ENCODE measurements at regions of chr7 and their contacts with region 1.

Region 1: GRCh38 chr7:155003376-155004214 is 671 bp upstream of the PAXIP1 start:
- DNase-seq: peak; percentile 54 to 91
- H3K4me3 ChIP-seq: peak overlapping the region; percentile 80 to 100
- H3K27ac ChIP-seq: peak overlapping the region; percentile 84 to 87
- H3K4me1 ChIP-seq: peaks cover 0 to 16% (median 14%) of the 10 kb centered on the region in 4 donors
- H3K27me3 ChIP-seq: no peaks in the 10 kb centered on the region
- CTCF ChIP-seq: no peak

Region 2: DNA sequence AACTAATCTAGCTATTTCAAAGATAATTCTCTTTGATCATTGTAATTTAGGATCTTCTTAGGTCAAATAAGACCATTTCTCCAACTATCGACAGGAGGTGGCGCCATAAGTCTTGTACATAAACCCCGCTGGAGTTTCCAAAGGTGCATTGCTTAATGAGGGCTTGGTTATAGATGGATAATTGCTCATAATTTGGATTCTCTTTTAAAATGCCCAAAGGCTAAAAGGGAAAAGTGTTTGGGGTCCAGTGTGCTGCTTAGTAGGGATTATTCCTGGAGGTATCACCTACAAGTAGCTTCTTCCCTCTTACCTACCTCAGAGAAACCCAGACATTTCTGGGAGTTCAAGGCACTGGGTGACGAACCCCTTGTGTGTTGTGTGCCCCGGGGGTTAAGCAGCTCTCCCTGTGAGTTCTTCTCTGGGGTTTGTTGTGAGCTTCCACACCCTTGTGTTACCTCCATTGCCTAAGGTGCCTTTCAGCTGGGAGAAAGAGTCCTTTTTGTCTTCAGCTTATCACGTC is 75.9 kb before region 1 on chr7:
- intact Hi-C with region 1: loop called (anchors 5 kb)
- DNase-seq: peak; percentile 81 to 93
- H3K4me3 ChIP-seq: peak overlapping the region; percentile 65 to 66
- H3K27ac ChIP-seq: peak overlapping the region; percentile 80 to 94
- H3K4me1 ChIP-seq: peaks cover 0 to 10% (median 2%) of the 10 kb centered on the region in 4 donors
- H3K27me3 ChIP-seq: no peaks in the 10 kb centered on the region
- CTCF ChIP-seq: peak; percentile 57 to 62

Region 3: DNA sequence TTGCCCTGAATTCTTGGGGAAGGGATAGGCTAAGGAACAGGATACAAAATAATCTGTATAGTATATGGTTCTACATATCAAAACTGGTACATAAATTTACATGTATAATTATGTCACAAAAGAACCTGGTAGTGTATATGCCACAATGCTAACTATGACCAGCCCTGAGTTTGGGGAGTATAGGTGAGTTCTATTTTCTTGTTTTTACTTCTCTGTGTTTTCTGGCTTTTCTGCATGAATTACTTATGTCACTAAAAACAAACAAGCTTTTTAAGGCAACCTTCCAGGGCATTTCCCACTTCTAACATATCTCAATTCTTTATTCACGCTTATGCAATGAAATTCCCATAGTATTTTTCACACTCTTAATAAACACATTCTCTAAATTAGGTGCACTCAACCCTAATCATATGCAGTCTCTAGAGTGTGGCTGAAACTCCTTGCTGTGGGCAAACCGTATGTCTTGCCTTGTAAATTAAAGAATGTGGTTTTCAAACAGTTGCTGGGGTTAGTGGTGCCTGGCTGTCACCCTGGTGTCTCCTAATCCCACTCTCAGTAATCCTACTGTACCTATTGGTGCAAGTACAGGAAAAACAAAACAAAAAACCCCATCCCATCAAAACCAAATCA is 280.1 kb after region 1 on chr7:
- intact Hi-C with region 1: no loop called
- DNase-seq: no peak
- H3K4me3 ChIP-seq: no peak overlapping the region
- H3K27ac ChIP-seq: no peak overlapping the region
- H3K4me1 ChIP-seq: no peaks in the 10 kb centered on the region
- H3K27me3 ChIP-seq: peaks cover 0 to 18% of the 10 kb centered on the region in 2 donors
- CTCF ChIP-seq: no peak

Measured in tibial artery (tissue), 4 donors.